ENCODE measurements at regions of chr18 and their contacts with region 1.

Region 1: GRCh38 chr18:66729442-66730239 is 125.8 kb upstream of the CDH19 start:
- DNase-seq: no peak
- ATAC-seq: no peak

Region 2: GRCh38 chr18:66676699-66677098 is 52.9 kb before region 1 on chr18:
- intact Hi-C with region 1: loop called in 1 of 2 experiments (anchors 10 kb)
- DNase-seq: no peak
- ATAC-seq: no peak

Region 3: GRCh38 chr18:66916834-66917233 is 187.2 kb after region 1 on chr18:
- intact Hi-C with region 1: no loop called
- DNase-seq: no peak
- ATAC-seq: no peak

Measured in left colon (tissue), 2 donors.